HEK293 (cell line): ENCODE measurements at regions of chr6 and their contacts with region 1.

Region 1: GRCh38 chr6:160520043-160520904 is 143.8 kb downstream of the LPA start:
- H3K4me3 ChIP-seq: peak overlapping the region; percentile 61
- H3K27ac ChIP-seq: no peak overlapping the region; the same call in 1 of the 2 replicates
- H3K4me1 ChIP-seq: no peaks in the 10 kb centered on the region
- CTCF ChIP-seq: peak; percentile 81

Region 2: GRCh38 chr6:160378218-160378617 is 142.1 kb before region 1 on chr6:
- CTCF ChIA-PET with region 1: no interaction called
- POLR2A ChIA-PET with region 1: no interaction called
- H3K4me3 ChIP-seq: no peak overlapping the region
- H3K27ac ChIP-seq: no peak overlapping the region
- H3K4me1 ChIP-seq: no peaks in the 10 kb centered on the region
- CTCF ChIP-seq: no peak

Region 3: GRCh38 chr6:160510199-160510598 is 10.1 kb before region 1 on chr6:
- CTCF ChIA-PET with region 1: interaction called, 20 read pairs
- POLR2A ChIA-PET with region 1: no interaction called
- H3K4me3 ChIP-seq: no peak overlapping the region
- H3K27ac ChIP-seq: no peak overlapping the region
- H3K4me1 ChIP-seq: no peaks in the 10 kb centered on the region
- CTCF ChIP-seq: no peak

Region 4: GRCh38 chr6:160534050-160534696 is 13.9 kb after region 1 on chr6:
- CTCF ChIA-PET with region 1: interaction called, 95 read pairs
- POLR2A ChIA-PET with region 1: no interaction called
- H3K4me3 ChIP-seq: no peak overlapping the region; the same call in 1 of the 2 replicates
- H3K27ac ChIP-seq: no peak overlapping the region
- H3K4me1 ChIP-seq: no peaks in the 10 kb centered on the region
- CTCF ChIP-seq: no peak; the same call in 1 of the 2 replicates

Region 5: DNA sequence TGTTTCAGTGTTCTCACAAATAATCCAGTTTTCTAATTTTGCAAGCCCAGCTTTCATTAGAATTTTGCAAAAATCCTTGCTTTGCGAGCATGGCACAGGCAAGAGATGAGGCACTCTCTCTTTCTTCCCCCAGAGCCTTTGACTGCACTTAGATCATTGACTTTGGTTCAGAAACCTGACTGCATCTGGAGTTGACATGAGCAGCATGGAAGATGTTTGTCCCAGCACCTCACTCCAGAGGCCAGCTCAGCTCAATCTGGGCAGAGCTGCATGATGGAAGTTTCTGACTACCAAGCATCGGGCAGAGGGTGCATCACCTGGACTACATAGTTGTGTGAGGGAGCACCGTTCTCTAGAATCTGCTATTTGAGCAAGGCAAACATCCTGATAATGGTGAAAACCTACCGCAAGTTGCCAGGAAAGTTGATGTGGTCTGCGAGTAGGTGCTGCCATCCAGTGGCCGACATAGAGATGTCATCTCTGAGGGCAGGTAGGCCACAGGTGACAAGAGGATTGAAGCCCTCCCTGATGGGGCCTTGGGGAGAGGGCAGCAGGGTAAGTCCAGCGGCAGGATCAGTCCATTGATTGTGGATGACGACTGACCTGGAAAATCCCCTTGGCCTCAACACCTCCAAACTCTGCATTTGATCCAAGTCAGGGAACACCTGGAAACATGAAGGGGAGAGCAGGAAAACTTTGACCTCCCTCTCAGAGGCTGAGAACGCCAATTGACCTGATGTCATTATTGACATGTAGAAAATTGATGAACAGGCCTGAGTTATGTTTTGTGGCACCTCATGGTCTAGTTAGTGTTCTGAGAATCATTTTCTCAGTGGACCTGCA is 147.6 kb after region 1 on chr6:
- CTCF ChIA-PET with region 1: interaction called, 14 read pairs
- POLR2A ChIA-PET with region 1: no interaction called
- H3K4me3 ChIP-seq: no peak overlapping the region
- H3K27ac ChIP-seq: no peak overlapping the region
- H3K4me1 ChIP-seq: no peaks in the 10 kb centered on the region
- CTCF ChIP-seq: no peak